Right lobe of liver (tissue), 6 donors: ENCODE measurements at regions of chr15 and their contacts with region 1.

Region 1: DNA sequence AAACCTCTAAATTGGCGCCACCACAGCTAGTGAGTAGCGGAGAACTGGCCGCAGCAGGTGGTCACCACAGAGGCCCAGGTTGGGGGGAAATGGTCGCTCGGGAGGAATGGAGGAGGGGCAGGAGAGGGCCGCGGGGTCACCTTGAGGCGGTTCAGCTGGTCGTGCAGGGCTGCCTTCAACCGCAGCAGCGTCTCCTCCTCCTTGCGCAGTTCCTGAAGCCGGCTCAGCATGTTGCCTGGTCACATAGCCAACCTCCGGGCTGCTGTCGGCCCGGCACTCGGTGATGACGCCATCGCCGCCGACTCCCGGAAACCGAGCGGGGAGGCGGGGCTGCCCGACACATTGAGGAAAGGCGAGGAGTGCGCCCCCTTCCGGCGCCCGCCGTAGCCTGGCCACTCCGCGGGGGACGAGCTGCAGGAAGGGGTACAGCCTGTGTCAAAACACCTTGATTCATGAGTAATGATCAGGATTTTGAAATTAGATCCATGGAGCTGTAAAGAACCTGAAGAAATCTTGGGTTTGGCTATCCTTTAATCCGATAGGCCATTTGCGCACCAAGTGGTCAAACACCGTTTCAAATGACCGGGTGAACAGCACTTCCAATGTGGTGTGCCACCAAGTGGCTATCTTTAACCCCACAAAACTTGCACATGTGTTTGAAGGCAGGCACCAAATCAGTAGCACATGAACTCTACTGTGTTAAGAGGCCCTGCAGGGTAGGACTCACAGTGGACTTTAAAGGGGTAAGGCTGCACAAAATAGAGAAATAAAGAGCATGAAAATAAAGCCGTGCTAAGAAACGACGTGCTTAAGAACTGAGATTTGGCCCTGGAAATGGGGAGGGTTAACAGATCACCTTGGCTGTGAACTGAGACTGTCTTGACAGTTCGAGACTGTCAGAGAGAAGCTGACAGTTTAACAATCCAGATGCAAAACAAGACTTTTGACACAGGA is at the start of gene SNAPC5:
- DNase-seq: peak; percentile 96 to 97 (median 97)
- ATAC-seq: peak; percentile 95 to 97 (median 96)
- H3K4me3 ChIP-seq: peak within 1 kb of the TSS; percentile 83 to 93 (median 90)
- H3K27ac ChIP-seq: peak within 1 kb of the TSS; percentile 65 to 85 (median 75)
- H3K4me1 ChIP-seq: peaks cover 0 to 39% (median 12%) of the 10 kb centered on the region in 4 donors
- H3K27me3 ChIP-seq: no peaks in the 10 kb centered on the region
- CTCF ChIP-seq: peak; percentile 98 to 99 (median 98)
- POLR2A ChIP-seq: peak; percentile 80
- total RNA-seq, gene SNAPC5: 11.8 to 23.1 (median 16.2) TPM

Region 2: GRCh38 chr15:66293419-66294156 is 204.2 kb before region 1 on chr15 and contains the start of gene DIS3L:
- intact Hi-C with region 1: loop called in 1 of 2 experiments (anchors 10 kb)
- DNase-seq: peak; percentile 68 to 76 (median 71)
- ATAC-seq: peak; percentile 83 to 90 (median 89)
- H3K4me3 ChIP-seq: peak within 1 kb of the TSS; percentile 68 to 71 (median 70)
- H3K27ac ChIP-seq: peak within 1 kb of the TSS; percentile 78 to 86 (median 84)
- H3K4me1 ChIP-seq: peaks cover 0 to 11% (median 0%) of the 10 kb centered on the region in 4 donors
- H3K27me3 ChIP-seq: no peaks in the 10 kb centered on the region
- CTCF ChIP-seq: peak in 1 of 4 donors; percentile 3
- POLR2A ChIP-seq: peak; percentile 79
- total RNA-seq, gene DIS3L: 16.1 to 32.3 (median 19.6) TPM

Region 3: GRCh38 chr15:66386204-66387123 is 111.3 kb before region 1 on chr15 and contains the start of gene MAP2K1:
- intact Hi-C with region 1: loop called (anchors 10 kb)
- DNase-seq: peak; percentile 99
- ATAC-seq: peak; percentile 94 to 98 (median 96)
- H3K4me3 ChIP-seq: peak within 1 kb of the TSS; percentile 88 to 91 (median 90)
- H3K27ac ChIP-seq: peak within 1 kb of the TSS; percentile 78 to 94 (median 91)
- H3K4me1 ChIP-seq: peaks cover 0 to 22% (median 4%) of the 10 kb centered on the region in 4 donors
- H3K27me3 ChIP-seq: no peaks in the 10 kb centered on the region
- CTCF ChIP-seq: peak; percentile 45 to 88 (median 80)
- POLR2A ChIP-seq: peak; percentile 88
- total RNA-seq, gene MAP2K1: 25.7 to 68.8 (median 53.9) TPM